Ovary (tissue), 10 donors: ENCODE measurements at regions of chr13 and their contacts with region 1.

Region 1: DNA sequence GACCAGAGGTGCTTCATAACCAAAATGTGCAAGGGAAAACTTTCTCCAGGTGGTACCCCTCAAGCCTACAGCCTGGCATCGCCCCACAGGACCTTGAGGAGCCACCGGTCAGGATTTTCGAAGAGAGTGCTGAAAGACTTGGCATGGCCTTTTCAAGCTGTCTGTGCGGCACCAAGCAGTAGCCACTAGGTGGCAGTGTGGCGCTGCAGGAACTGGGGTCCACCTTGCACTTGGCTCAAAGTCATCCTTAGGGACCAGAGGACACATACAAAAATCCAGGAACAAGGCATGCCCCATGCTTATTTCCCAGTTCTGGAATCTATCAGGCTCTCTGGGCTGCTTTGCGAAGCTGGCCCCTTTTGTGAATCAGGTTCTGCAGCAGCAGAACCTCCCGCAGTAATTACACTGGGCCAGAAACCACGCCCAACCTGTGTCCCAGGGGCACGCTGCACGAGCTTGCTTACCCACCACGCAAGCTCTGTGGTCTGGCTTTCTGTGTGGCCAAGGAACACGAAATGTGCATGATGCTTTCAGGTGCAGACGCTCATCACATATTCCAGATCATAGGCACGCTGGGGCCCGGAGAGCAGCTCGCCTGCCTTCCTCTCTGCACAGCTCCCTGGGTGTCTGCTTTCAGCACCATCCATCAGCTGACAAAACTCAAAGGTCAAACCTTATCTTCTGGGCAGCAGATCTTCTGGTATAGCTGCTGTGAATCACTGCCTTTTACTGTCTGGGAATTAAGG is 87.2 kb downstream of the SLC7A1 start:
- DNase-seq: peak; percentile 80 to 89 (median 86)
- H3K4me3 ChIP-seq: no peak overlapping the region
- H3K27ac ChIP-seq: no peak overlapping the region
- H3K4me1 ChIP-seq: peaks cover 6% of the 10 kb centered on the region
- H3K27me3 ChIP-seq: no peaks in the 10 kb centered on the region
- CTCF ChIP-seq: peak; percentile 82 to 94 (median 85)
- EP300 ChIP-seq: no peak
- POLR2A ChIP-seq: no peak

Region 2: GRCh38 chr13:29771247-29771646 is 262.9 kb after region 1 on chr13:
- intact Hi-C with region 1: loop called in 1 of 4 experiments (anchors 10 kb)
- DNase-seq: no peak
- H3K4me3 ChIP-seq: no peak overlapping the region
- H3K27ac ChIP-seq: no peak overlapping the region
- H3K4me1 ChIP-seq: no peaks in the 10 kb centered on the region
- H3K27me3 ChIP-seq: no peaks in the 10 kb centered on the region
- CTCF ChIP-seq: peak in 1 of 3 donors; percentile 39
- EP300 ChIP-seq: no peak
- POLR2A ChIP-seq: no peak

Region 3: GRCh38 chr13:29850224-29850898 is 342.1 kb after region 1 on chr13 and contains the start of gene UBL3:
- intact Hi-C with region 1: loop called in 1 of 4 experiments (anchors 10 kb)
- DNase-seq: peak; percentile 96 to 98 (median 97)
- H3K4me3 ChIP-seq: peak within 1 kb of the TSS; percentile 89
- H3K27ac ChIP-seq: peak within 1 kb of the TSS; percentile 96 to 97
- H3K4me1 ChIP-seq: no peaks in the 10 kb centered on the region
- H3K27me3 ChIP-seq: no peaks in the 10 kb centered on the region
- CTCF ChIP-seq: peak in 1 of 3 donors; percentile 18
- EP300 ChIP-seq: no peak
- POLR2A ChIP-seq: peak; percentile 89
- total RNA-seq, gene UBL3: 30.9 to 41.4 (median 35.7) TPM